Left lung (tissue), 14 donors: ENCODE measurements at regions of chr10 and their contacts with region 1.

Region 1: GRCh38 chr10:122435212-122435827 is 19.1 kb upstream of the ARMS2 start:
- DNase-seq: peak in 2 of 4 donors; percentile 19 to 46
- ATAC-seq: peak; percentile 68
- H3K4me3 ChIP-seq: no peak overlapping the region
- H3K27ac ChIP-seq: no peak overlapping the region
- H3K4me1 ChIP-seq: no peaks in the 10 kb centered on the region
- H3K27me3 ChIP-seq: no peaks in the 10 kb centered on the region
- CTCF ChIP-seq: peak; percentile 48 to 57

Region 2: GRCh38 chr10:122298598-122299301 is 136.6 kb before region 1 on chr10:
- intact Hi-C with region 1: loop called in 1 of 2 experiments (anchors 10 kb)
- DNase-seq: peak in 2 of 4 donors; percentile 59 to 80
- ATAC-seq: peak; percentile 93
- H3K4me3 ChIP-seq: no peak overlapping the region
- H3K27ac ChIP-seq: no peak overlapping the region
- H3K4me1 ChIP-seq: peaks cover 0 to 4% of the 10 kb centered on the region in 2 donors
- H3K27me3 ChIP-seq: no peaks in the 10 kb centered on the region
- CTCF ChIP-seq: peak; percentile 86 to 89

Region 3: GRCh38 chr10:122342293-122343134 is 92.8 kb before region 1 on chr10:
- intact Hi-C with region 1: loop called in 1 of 2 experiments (anchors 10 kb)
- DNase-seq: peak in 2 of 4 donors; percentile 16 to 40
- ATAC-seq: peak; percentile 86
- H3K4me3 ChIP-seq: no peak overlapping the region
- H3K27ac ChIP-seq: peak overlapping the region in 1 of 2 donors; percentile 13
- H3K4me1 ChIP-seq: no peaks in the 10 kb centered on the region
- H3K27me3 ChIP-seq: no peaks in the 10 kb centered on the region
- CTCF ChIP-seq: peak; percentile 70 to 84

Region 4: DNA sequence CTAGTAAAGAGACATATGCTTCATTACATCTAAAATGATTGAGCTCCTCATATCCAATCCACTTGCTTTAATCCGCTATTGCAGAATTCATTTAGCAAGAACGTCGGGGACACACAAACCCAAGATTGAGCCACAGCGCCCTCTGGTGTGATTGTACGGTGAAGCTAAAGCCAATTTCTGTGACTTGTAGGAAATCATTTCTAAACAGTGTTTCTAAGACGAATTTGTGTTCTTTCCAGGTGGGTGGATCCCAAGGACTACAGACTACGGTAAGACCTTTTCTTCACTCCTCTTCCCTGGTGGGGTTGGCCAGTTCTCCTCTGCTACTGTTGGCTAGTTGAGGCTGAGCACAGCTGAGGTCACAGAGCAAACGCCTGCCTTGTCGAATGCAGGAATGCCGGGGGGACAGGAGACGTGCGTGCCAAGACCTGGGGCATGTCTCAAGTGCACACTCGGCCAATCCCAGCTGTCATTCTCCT is 130.4 kb after region 1 on chr10:
- intact Hi-C with region 1: loop called in 1 of 2 experiments (anchors 10 kb)
- DNase-seq: peak in 3 of 4 donors; percentile 70 to 84 (median 76)
- ATAC-seq: peak; percentile 76
- H3K4me3 ChIP-seq: no peak overlapping the region
- H3K27ac ChIP-seq: no peak overlapping the region
- H3K4me1 ChIP-seq: peaks cover 2 to 5% of the 10 kb centered on the region in 2 donors
- H3K27me3 ChIP-seq: peaks cover 0 to 4% of the 10 kb centered on the region in 2 donors
- CTCF ChIP-seq: peak; percentile 66 to 79